Mucosa of descending colon (tissue), 3 donors: ENCODE measurements at regions of chr7 and their contacts with region 1.

Region 1: GRCh38 chr7:12623897-12624498 is 53.5 kb downstream of the SCIN start:
- DNase-seq: no peak
- ATAC-seq: peak; percentile 59
- H3K4me3 ChIP-seq: no peak overlapping the region
- H3K4me1 ChIP-seq: no peaks in the 10 kb centered on the region
- CTCF ChIP-seq: peak; percentile 49

Region 2: DNA sequence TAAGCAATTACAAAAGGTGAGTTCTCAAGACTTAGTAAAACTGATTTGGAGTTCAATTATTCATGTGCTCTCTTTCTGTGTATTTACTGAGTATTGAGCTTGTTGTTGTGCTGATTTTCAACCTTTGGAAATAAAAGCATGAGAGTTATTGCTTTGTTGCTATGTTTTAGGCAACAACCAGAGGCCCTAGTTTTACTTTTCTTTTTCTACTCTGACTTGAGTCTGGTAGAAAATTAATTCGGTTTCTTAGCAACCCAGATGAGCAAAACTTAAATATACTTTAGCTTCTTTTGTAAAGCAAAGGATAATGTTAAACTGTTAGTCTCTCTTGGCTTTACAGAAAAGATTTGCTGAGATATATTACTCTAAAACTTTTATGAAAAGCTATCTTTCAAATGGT is 119.8 kb before region 1 on chr7:
- intact Hi-C with region 1: no loop called
- DNase-seq: no peak
- ATAC-seq: no peak
- H3K4me3 ChIP-seq: no peak overlapping the region
- H3K4me1 ChIP-seq: no peaks in the 10 kb centered on the region
- CTCF ChIP-seq: no peak

Region 3: DNA sequence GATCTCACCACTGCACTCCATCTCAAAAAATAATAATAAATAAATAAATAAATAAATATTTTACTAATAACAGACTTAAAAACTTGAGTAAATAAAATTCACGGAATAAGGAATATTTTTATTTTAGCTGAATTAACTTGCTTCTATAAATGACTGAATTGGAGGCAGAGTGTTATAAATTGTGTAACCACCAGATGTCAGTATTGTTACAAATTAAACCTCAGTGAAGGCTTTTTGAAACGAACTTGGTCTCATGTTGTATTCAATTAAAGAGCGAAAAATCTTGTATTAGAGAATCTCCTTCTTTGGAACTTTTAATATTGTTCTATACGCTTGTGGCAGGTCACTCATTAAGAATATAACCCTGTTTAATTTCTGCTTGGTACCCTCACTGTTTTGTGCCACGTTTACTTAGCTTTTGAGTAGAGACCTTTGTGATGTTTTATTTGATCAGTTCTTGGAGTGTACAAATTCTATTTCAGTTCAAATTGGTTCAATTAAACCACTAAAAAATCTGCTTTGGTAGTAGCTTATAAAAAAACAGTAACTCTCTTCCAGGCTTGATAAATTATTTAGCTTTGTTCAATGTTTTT is 99.1 kb before region 1 on chr7:
- intact Hi-C with region 1: loop called in 1 of 2 experiments (anchors 5 kb)
- DNase-seq: no peak
- ATAC-seq: peak; percentile 52
- H3K4me3 ChIP-seq: no peak overlapping the region
- H3K4me1 ChIP-seq: no peaks in the 10 kb centered on the region
- CTCF ChIP-seq: peak; percentile 11